ENCODE measurements at regions of chr10 and their contacts with region 1.

Region 1: DNA sequence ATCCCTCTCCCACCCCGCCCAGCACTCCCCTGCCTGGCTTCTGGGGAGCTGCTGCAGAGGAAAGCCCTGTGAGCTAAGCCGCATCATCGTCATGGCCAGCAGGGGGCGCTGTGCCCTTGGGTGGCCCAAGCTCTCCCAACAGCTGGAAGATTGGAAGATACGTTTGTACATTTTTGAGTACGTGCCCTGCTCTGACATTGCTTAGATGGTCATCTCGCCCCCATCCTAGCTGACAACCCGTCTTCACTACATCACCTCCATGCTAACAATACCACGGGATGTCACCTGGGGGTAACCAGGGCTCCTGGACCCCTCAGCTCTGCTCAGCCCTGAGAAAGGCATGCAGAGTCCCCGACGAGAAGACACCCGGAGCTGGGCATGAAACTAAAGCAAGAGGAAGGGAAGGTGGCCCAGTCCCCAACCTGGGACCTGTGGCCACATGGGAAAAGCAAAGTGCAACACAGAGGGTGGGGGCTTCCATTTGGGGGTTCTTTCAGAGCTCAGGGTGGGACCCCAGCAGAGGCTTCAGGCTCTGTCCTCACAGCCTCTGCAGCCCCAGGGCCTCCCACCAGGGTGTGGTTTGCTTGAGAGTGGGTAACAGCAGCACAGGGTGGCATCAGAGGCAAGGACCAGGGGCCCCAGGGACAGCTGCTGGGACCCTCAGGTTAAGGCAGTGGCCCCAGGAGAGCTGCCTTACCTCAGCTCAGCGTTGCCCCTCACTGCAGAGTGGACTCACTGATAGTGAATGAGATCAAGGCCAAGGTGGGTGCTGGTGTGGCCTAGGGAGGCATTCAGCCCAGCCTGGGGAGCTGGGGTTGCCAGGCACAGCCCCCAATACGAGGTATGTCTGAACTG is 136.7 kb downstream of the PTPN20 start:
- DNase-seq: peak; percentile 77
- ATAC-seq: peak; percentile 87
- H3K4me3 ChIP-seq: no peak overlapping the region
- H3K27ac ChIP-seq: peak overlapping the region; percentile 14; the same call in 1 of the 2 replicates
- H3K4me1 ChIP-seq: peaks cover 13% of the 10 kb centered on the region; the same call in 1 of the 2 replicates
- H3K27me3 ChIP-seq: no peaks in the 10 kb centered on the region
- CTCF ChIP-seq: peak; percentile 92
- POLR2A ChIP-seq: peak; percentile 48; the same call in 1 of the 2 replicates
- RAD21 ChIP-seq: peak; percentile 98

Region 2: DNA sequence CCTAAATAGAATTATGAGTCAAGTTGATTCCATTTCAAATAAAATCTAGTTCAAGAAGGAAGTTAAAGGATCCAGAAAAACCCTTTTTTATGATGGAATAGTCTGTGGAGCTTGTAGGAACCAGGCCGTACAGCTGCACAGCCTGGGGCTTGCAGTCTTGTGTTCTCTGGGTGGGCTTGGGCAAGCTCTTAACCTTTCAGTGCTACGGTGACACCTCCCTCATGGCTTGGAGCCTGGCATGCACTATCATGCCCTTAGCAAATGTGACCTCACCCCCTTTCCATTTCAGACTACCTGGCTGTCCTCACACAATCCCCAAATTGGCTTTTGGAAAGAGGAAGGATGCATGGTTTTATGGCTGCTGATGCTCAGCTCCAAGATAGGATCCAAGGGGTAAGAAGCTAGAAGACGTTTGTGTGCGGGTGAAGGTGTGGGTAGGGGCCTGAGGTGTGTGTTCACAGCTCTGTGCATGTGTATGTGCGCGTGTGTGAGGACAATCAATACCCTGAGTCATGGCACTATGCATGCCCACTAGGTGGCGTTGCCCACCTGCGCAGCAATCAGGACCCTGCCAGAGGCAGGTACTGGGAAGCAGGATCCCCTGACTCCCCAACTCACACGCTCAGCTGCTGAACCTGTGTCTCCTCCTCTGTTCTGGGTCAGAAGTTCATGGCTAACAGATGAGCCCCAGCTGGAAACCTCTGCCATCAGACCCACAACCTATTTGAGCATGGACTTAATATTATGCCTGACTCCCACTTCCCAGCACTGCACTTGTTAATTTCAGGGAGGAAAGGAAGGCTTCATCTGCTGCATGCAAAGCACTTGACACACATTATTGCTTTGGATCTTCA is 23.3 kb before region 1 on chr10:
- CTCF ChIA-PET with region 1: interaction called, 12 read pairs
- POLR2A ChIA-PET with region 1: no interaction called
- dilution Hi-C with region 1: no loop called
- in situ Hi-C with region 1: no loop called
- intact Hi-C with region 1: loop called (anchors 2 kb)
- DNase-seq: peak; percentile 62
- ATAC-seq: peak; percentile 76
- H3K4me3 ChIP-seq: no peak overlapping the region
- H3K27ac ChIP-seq: no peak overlapping the region
- H3K4me1 ChIP-seq: peaks cover 5% of the 10 kb centered on the region; the same call in 1 of the 2 replicates
- H3K27me3 ChIP-seq: no peaks in the 10 kb centered on the region
- CTCF ChIP-seq: peak; percentile 78
- POLR2A ChIP-seq: no peak
- RAD21 ChIP-seq: peak; percentile 89

Region 3: DNA sequence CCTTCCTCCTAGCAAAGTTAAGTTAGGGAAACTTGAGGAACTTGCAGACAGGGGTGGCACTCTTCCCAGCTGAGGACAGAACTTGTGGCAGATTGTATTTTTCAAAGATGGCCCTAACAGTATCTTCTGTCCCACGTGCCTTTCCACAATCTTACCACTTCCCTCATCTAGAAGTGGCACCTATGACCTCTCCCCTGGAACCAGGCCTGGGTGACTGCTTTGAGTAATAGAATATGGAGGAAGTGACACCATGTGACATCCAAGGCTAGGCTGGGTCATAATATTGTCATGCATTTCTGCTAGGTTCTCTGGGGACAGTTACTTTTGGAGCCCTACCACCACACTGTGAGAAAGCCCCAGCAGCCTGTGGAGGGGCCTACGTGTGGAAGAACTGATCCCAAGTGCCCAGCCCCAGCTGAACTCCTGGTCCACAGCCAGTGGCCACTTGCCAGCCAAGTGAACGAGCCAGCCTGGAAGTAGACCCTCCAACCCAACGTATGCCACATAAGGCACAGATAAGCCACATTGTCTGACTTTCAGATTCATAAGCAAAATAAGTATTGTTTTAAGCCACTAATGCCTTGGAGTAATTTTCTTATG is 57.0 kb after region 1 on chr10:
- CTCF ChIA-PET with region 1: interaction called, 3 read pairs
- POLR2A ChIA-PET with region 1: no interaction called
- dilution Hi-C with region 1: no loop called
- in situ Hi-C with region 1: no loop called
- intact Hi-C with region 1: loop called (anchors 5 kb)
- DNase-seq: peak; percentile 3
- ATAC-seq: peak; percentile 3; the same call in 1 of the 2 replicates
- H3K4me3 ChIP-seq: no peak overlapping the region
- H3K27ac ChIP-seq: peak overlapping the region; percentile 81
- H3K4me1 ChIP-seq: peaks cover 20% of the 10 kb centered on the region
- H3K27me3 ChIP-seq: no peaks in the 10 kb centered on the region
- CTCF ChIP-seq: no peak
- POLR2A ChIP-seq: no peak
- RAD21 ChIP-seq: no peak

Region 4: GRCh38 chr10:48649349-48649944 is 1601.5 kb after region 1 on chr10:
- CTCF ChIA-PET with region 1: no interaction called
- POLR2A ChIA-PET with region 1: no interaction called
- dilution Hi-C with region 1: no loop called
- in situ Hi-C with region 1: no loop called
- intact Hi-C with region 1: no loop called
- DNase-seq: no peak
- ATAC-seq: peak; percentile 48
- H3K4me3 ChIP-seq: no peak overlapping the region
- H3K27ac ChIP-seq: no peak overlapping the region
- H3K4me1 ChIP-seq: no peaks in the 10 kb centered on the region
- H3K27me3 ChIP-seq: no peaks in the 10 kb centered on the region
- CTCF ChIP-seq: no peak
- POLR2A ChIP-seq: no peak
- RAD21 ChIP-seq: no peak